GM12878 (cell line): ENCODE measurements at regions of chr4 and their contacts with region 1.

Region 1: DNA sequence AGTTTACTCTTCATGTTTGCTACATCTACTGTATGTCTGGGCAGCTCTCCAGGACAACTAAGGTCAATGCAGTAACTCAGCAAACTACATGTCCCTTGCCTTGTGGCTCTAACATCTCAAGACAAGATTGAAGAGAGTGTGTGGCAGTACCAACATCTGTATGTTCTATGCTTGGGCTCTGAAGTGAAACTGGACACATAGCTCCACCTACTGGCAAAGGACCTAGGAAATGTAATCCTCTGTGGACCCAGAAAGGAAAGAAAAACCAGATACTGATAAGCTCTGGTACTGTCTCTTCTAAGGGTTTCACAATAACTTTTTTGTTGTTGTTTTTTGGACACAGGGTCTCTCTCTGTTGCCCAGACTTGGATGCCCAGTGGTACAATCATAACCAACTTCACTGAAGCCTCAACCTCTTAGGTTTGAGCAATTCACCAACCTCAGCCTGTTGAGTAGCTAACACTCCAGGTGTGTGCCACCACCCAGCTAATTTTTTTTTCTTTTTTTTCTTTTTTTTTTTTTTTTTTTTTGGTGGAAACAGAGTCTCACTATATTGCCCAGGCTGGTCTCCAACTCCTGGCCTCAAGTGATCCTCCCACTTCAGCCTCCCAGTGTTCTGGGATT is 64.1 kb downstream of the QDPR start:
- DNase-seq: peak; percentile 37
- ATAC-seq: peak; percentile 99
- H3K4me3 ChIP-seq: no peak overlapping the region
- H3K27ac ChIP-seq: no peak overlapping the region
- H3K4me1 ChIP-seq: no peaks in the 10 kb centered on the region
- H3K27me3 ChIP-seq: no peaks in the 10 kb centered on the region
- CTCF ChIP-seq: peak; percentile 69 to 74 (median 71); a peak in 5 of 6 replicates
- EP300 ChIP-seq: no peak
- POLR2A ChIP-seq: no peak
- RAD21 ChIP-seq: peak; percentile 84

Region 2: GRCh38 chr4:16794816-16795445 is 652.9 kb before region 1 on chr4:
- CTCF ChIA-PET with region 1: interaction called, 11 read pairs
- POLR2A ChIA-PET with region 1: no interaction called
- RAD21 ChIA-PET with region 1: interaction called, 3 read pairs
- SMC1A ChIA-PET with region 1: no interaction called
- in situ Hi-C with region 1: no loop called
- intact Hi-C with region 1: loop called (anchors 5 kb)
- DNase-seq: no peak
- ATAC-seq: peak; percentile 51; the same call in 2 of the 3 replicates
- H3K4me3 ChIP-seq: no peak overlapping the region
- H3K27ac ChIP-seq: no peak overlapping the region
- H3K4me1 ChIP-seq: no peaks in the 10 kb centered on the region
- H3K27me3 ChIP-seq: no peaks in the 10 kb centered on the region
- CTCF ChIP-seq: peak; percentile 55 to 68 (median 65)
- EP300 ChIP-seq: no peak
- POLR2A ChIP-seq: no peak
- RAD21 ChIP-seq: peak; percentile 57

Region 3: GRCh38 chr4:17173300-17173699 is 274.5 kb before region 1 on chr4:
- CTCF ChIA-PET with region 1: interaction called, 17 read pairs
- POLR2A ChIA-PET with region 1: no interaction called
- RAD21 ChIA-PET with region 1: interaction called, 8 read pairs
- SMC1A ChIA-PET with region 1: interaction called, 4 read pairs
- in situ Hi-C with region 1: no loop called
- intact Hi-C with region 1: loop called (anchors 5 kb)
- DNase-seq: no peak
- ATAC-seq: peak; percentile 36; the same call in 1 of the 3 replicates
- H3K4me3 ChIP-seq: no peak overlapping the region
- H3K27ac ChIP-seq: no peak overlapping the region
- H3K4me1 ChIP-seq: no peaks in the 10 kb centered on the region
- H3K27me3 ChIP-seq: no peaks in the 10 kb centered on the region
- CTCF ChIP-seq: peak; percentile 4 to 14 (median 8); a peak in 1 of 6 replicates
- EP300 ChIP-seq: no peak
- POLR2A ChIP-seq: no peak
- RAD21 ChIP-seq: peak; percentile 31; the same call in 1 of the 2 replicates

Region 4: GRCh38 chr4:17324386-17324830 is 123.4 kb before region 1 on chr4:
- CTCF ChIA-PET with region 1: interaction called, 31 read pairs
- POLR2A ChIA-PET with region 1: no interaction called
- RAD21 ChIA-PET with region 1: interaction called, 32 read pairs
- SMC1A ChIA-PET with region 1: interaction called, 28 read pairs
- in situ Hi-C with region 1: no loop called
- intact Hi-C with region 1: no loop called
- DNase-seq: no peak
- ATAC-seq: peak; percentile 70
- H3K4me3 ChIP-seq: no peak overlapping the region
- H3K27ac ChIP-seq: no peak overlapping the region
- H3K4me1 ChIP-seq: no peaks in the 10 kb centered on the region
- H3K27me3 ChIP-seq: no peaks in the 10 kb centered on the region
- CTCF ChIP-seq: peak; percentile 45 to 64 (median 52)
- EP300 ChIP-seq: no peak
- POLR2A ChIP-seq: no peak
- RAD21 ChIP-seq: peak; percentile 66

Region 5: DNA sequence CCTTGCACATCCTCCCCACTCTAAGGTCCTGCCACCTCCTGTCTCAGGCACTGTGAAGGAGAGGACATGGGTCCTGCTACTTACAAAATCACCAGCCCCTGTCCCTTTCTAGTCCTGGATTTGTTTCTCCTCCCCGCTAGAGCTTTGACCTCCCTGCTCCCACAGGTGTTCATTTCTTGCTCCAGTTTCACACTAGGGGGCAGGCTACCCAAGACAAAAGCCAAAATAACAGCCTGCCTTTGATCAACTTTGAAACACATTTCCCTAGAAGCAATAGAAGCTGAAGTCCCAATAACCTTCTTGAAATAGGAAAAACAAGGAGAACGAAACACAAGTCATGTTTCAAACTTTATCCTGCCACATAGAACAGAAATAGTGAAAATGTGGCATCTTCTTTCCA is 100.3 kb before region 1 on chr4:
- CTCF ChIA-PET with region 1: interaction called, 86 read pairs
- POLR2A ChIA-PET with region 1: no interaction called
- RAD21 ChIA-PET with region 1: interaction called, 50 read pairs
- SMC1A ChIA-PET with region 1: interaction called, 63 read pairs
- in situ Hi-C with region 1: no loop called
- intact Hi-C with region 1: loop called (anchors 1 kb)
- DNase-seq: no peak
- ATAC-seq: peak; percentile 91
- H3K4me3 ChIP-seq: no peak overlapping the region
- H3K27ac ChIP-seq: no peak overlapping the region
- H3K4me1 ChIP-seq: no peaks in the 10 kb centered on the region
- H3K27me3 ChIP-seq: no peaks in the 10 kb centered on the region
- CTCF ChIP-seq: peak; percentile 55 to 65 (median 57); a peak in 5 of 6 replicates
- EP300 ChIP-seq: no peak
- POLR2A ChIP-seq: no peak
- RAD21 ChIP-seq: peak; percentile 74

Region 6: DNA sequence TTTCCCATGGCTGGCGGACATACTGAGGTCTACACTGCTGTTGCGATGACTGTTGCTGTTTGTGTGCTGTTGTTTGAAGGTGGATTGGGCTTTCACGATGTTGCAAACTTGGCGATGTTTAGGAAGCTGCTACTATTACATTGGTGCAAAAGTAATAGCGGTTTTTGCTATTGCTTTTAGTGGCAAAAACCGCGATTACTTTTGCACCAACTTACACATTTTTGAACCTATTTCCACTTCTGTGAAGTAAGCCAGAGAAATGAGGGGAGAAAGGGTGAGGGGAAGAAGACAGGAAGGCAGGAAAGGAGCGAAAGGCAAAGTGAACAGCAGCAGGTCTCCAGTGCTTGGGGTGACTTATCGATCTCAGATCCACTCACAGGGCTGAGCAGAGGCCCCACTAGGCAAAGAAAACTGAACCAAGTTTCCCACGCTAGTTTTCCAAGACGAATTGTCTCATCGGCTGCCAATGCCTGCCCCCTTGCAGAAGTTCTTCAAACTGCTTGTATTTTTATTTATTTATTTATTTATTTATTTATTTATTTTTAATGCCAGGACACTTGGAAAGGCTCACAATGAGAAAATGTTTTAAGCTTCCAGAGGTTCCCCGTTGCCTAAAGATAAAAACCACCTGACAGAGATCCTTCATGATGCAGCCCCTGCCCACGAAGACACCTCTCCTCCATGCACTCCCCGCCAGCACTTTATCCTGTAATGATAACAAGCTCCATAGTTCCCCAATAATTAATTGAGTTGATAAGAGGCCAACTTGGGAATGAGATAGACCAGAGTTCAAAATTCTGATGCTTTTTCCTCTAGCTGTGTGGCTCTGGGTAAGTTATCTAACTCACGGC is 20.8 kb after region 1 on chr4:
- CTCF ChIA-PET with region 1: interaction called, 20 read pairs
- POLR2A ChIA-PET with region 1: no interaction called
- RAD21 ChIA-PET with region 1: interaction called, 8 read pairs
- SMC1A ChIA-PET with region 1: interaction called, 12 read pairs
- in situ Hi-C with region 1: no loop called
- intact Hi-C with region 1: no loop called
- DNase-seq: no peak
- ATAC-seq: no peak
- H3K4me3 ChIP-seq: no peak overlapping the region
- H3K27ac ChIP-seq: no peak overlapping the region
- H3K4me1 ChIP-seq: no peaks in the 10 kb centered on the region
- H3K27me3 ChIP-seq: no peaks in the 10 kb centered on the region
- CTCF ChIP-seq: peak in 2 of 3 experiments; percentile 25 to 35; a peak in 3 of 6 replicates
- EP300 ChIP-seq: no peak
- POLR2A ChIP-seq: no peak
- RAD21 ChIP-seq: peak; percentile 22; the same call in 1 of the 2 replicates